GM10248 (cell line): ENCODE measurements at regions of chr11 and their contacts with region 1.

Region 1: GRCh38 chr11:33362051-33362910 is 105.1 kb downstream of the HIPK3 start:
- DNase-seq: peak; percentile 45
- CTCF ChIP-seq: peak; percentile 45

Region 2: GRCh38 chr11:33347490-33348125 is 14.7 kb before region 1 on chr11:
- CTCF ChIA-PET with region 1: interaction called, 11 read pairs
- POLR2A ChIA-PET with region 1: no interaction called
- DNase-seq: peak; percentile 37
- CTCF ChIP-seq: no peak